ENCODE measurements at regions of chr5 and their contacts with region 1.

Region 1: DNA sequence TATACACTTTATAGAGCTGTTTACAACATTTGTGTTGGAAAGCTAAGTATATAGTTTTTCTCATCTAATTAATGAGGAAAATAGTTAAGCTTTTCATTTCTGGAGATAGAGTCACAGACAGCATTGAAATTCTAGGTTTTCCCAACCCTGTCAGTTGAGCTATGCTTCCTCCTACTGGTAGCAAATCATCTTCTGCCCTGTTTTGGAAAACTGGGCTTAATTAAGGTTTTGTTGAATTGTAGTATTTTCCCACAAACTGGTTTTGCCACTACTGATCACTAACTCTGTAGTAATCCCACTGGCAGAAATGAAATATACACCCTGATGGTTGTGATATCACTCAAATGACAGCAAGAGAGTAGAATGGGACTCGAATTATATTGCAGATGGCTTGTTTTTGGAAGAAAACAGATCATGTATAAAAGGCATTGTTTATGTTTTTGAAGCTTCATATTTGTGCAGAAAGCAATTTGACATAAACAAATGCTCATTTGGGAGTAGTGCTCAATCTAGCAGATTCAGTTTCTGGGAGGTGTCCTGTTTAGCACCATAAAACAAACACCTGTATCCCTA is 46.6 kb downstream of the CD180 start:
- DNase-seq: peak in 1 of 2 experiments; percentile 19
- H3K4me3 ChIP-seq: no peak overlapping the region
- H3K4me3 Mint-ChIP-seq: no peak overlapping the region
- H3K27ac Mint-ChIP-seq: no peak overlapping the region
- H3K4me1 ChIP-seq: peaks cover 2% of the 10 kb centered on the region; the same call in 1 of the 2 replicates
- H3K4me1 Mint-ChIP-seq: no peaks in the 10 kb centered on the region
- H3K27me3 ChIP-seq: no peaks in the 10 kb centered on the region
- H3K27me3 Mint-ChIP-seq: no peaks in the 10 kb centered on the region
- CTCF ChIP-seq: peak; percentile 9 to 68

Region 2: DNA sequence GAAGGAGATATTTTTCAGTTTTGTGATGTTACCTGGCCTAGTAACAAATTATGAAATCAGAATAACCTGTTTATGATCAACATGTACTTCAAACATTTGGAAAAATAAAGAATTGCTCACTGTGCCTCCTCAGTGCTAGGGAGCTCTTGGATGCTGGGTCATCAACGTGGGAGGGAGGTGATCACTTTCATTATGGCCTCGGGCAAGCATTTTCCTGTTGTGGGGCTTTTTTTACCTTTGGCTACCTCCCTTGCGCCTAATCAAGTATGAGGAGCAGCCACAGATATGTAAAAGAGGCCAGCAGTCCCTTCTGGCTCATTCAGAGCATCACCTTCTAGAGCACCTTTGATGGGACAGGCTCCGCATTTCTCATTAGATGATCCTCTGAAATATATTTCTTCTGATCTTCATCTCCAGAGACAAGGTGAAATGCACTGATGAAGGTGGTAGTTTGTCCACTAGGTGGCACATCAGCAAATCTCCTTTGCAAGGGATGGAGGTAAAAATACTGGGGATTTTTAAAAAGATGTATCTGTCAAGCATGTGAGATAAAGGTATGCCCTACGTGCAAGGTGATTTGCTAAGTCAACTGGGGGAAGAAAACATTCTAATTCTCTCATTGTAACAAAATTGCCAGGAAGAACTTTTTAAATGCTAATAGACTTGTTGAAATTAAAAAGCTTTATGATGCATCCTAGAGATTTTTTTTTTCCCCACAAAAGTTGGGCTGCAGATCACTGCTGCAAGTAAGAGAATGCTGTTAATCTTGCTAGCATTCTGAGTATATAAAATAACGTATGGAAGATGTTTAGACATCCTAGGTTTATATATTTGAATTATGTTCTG is 335.7 kb before region 1 on chr5:
- CTCF ChIA-PET with region 1: interaction called, 5 read pairs
- POLR2A ChIA-PET with region 1: no interaction called
- intact Hi-C with region 1: loop called (anchors 1 kb)
- DNase-seq: peak in 1 of 2 experiments; percentile 57
- H3K4me3 ChIP-seq: no peak overlapping the region
- H3K4me3 Mint-ChIP-seq: no peak overlapping the region
- H3K27ac Mint-ChIP-seq: no peak overlapping the region
- H3K4me1 ChIP-seq: no peaks in the 10 kb centered on the region; the same call in 1 of the 2 replicates
- H3K4me1 Mint-ChIP-seq: peaks cover 7% of the 10 kb centered on the region
- H3K27me3 ChIP-seq: no peaks in the 10 kb centered on the region
- H3K27me3 Mint-ChIP-seq: peaks cover 29% of the 10 kb centered on the region
- CTCF ChIP-seq: peak; percentile 61 to 84

Region 3: DNA sequence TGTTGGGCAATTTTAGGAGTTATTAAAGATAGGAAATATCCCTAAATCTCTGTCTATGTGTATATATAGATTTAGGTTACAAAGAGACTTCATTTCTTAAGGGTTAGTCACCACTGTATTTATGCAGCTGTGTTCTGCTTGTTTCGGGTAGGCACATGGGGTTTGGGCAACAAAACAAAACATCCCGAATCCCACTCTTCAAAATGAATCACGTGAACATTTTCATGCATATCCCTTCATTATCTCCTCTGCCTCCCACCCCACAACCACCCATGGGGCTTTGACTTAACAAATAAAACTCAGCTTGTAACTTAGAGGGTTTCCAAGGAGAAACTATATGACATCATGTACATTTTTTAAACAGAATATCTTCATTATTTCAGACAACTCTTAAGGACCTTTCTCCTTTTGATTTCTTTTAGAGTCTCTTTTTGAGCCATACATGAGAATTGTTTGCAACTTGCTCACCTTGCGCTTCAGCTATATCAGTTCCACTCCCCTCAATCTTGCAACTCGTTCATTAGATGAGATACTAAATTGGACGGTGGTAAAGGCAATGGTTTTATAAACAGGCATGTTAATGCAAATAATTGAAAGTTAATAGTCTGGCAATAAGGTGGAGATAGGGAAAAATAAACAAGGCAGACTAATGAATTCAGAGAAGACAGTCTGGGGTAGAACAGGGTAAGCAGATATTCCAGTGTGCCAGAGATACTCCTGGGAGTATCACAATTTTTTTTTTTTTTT is 90.1 kb before region 1 on chr5:
- CTCF ChIA-PET with region 1: no interaction called
- POLR2A ChIA-PET with region 1: no interaction called
- intact Hi-C with region 1: no loop called
- DNase-seq: no peak
- H3K4me3 ChIP-seq: no peak overlapping the region
- H3K4me3 Mint-ChIP-seq: no peak overlapping the region
- H3K27ac Mint-ChIP-seq: peak overlapping the region; percentile 5
- H3K4me1 ChIP-seq: peaks cover 33% of the 10 kb centered on the region
- H3K4me1 Mint-ChIP-seq: peaks cover 38% of the 10 kb centered on the region
- H3K27me3 ChIP-seq: no peaks in the 10 kb centered on the region
- H3K27me3 Mint-ChIP-seq: no peaks in the 10 kb centered on the region
- CTCF ChIP-seq: no peak

Region 4: DNA sequence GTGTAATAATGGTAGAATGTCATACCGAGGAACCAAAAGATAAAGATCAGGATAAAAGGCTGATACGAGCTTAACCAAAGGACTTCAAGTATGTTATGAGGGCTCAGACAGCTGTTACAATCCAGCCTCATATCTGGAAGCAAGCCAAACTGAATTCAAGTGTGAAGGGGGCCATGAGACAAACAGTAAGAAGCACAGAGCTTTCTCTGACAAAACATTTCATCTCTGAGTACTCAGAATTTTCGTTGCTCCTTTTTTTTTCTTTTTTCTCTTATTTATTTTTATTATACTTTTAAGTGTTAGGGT is 99.5 kb after region 1 on chr5:
- CTCF ChIA-PET with region 1: no interaction called
- POLR2A ChIA-PET with region 1: no interaction called
- intact Hi-C with region 1: no loop called
- DNase-seq: no peak
- H3K4me3 ChIP-seq: no peak overlapping the region
- H3K4me3 Mint-ChIP-seq: no peak overlapping the region
- H3K27ac Mint-ChIP-seq: no peak overlapping the region
- H3K4me1 ChIP-seq: no peaks in the 10 kb centered on the region
- H3K4me1 Mint-ChIP-seq: peaks cover 9% of the 10 kb centered on the region
- H3K27me3 ChIP-seq: no peaks in the 10 kb centered on the region
- H3K27me3 Mint-ChIP-seq: no peaks in the 10 kb centered on the region
- CTCF ChIP-seq: no peak